MCF 10A (cell line): ENCODE measurements at regions of chr5 and their contacts with region 1.

Region 1: GRCh38 chr5:127206320-127207113 is 84.1 kb upstream of the MEGF10 start:
- DNase-seq: peak; percentile 95
- H3K4me3 Mint-ChIP-seq: no peak overlapping the region
- H3K27ac Mint-ChIP-seq: no peak overlapping the region
- H3K4me1 Mint-ChIP-seq: peaks cover 25% of the 10 kb centered on the region
- H3K27me3 Mint-ChIP-seq: no peaks in the 10 kb centered on the region
- CTCF ChIP-seq: no peak

Region 2: DNA sequence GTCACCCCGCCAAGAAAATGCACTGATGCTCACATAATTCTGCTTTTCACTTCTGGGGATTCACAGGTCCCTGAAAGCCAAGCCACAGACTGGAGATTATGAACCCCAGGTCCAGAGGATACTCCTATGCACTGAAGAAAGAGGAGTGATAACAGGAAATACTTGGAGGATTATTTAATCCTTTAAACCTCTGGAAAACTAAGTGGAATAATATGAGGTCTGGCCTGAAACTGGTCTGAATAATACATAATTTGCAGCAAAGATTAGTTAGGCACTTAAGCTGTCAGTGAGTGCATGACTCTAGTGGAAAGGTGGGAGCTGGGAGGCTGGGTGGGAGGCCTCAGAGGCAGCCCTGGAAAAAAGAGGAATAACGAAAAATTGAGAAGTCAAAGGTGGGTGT is 221.9 kb before region 1 on chr5:
- CTCF ChIA-PET with region 1: no interaction called
- POLR2A ChIA-PET with region 1: no interaction called
- intact Hi-C with region 1: no loop called
- DNase-seq: no peak
- H3K4me3 Mint-ChIP-seq: no peak overlapping the region
- H3K27ac Mint-ChIP-seq: no peak overlapping the region
- H3K4me1 Mint-ChIP-seq: no peaks in the 10 kb centered on the region
- H3K27me3 Mint-ChIP-seq: no peaks in the 10 kb centered on the region
- CTCF ChIP-seq: no peak

Region 3: GRCh38 chr5:127072861-127073846 is 133.4 kb before region 1 on chr5 and contains the start of gene C5orf63:
- CTCF ChIA-PET with region 1: no interaction called
- POLR2A ChIA-PET with region 1: no interaction called
- intact Hi-C with region 1: loop called (anchors 10 kb)
- DNase-seq: peak; percentile 58
- H3K4me3 Mint-ChIP-seq: peak within 1 kb of the TSS; percentile 85
- H3K27ac Mint-ChIP-seq: peak within 1 kb of the TSS; percentile 95
- H3K4me1 Mint-ChIP-seq: peaks cover 19% of the 10 kb centered on the region
- H3K27me3 Mint-ChIP-seq: no peaks in the 10 kb centered on the region
- CTCF ChIP-seq: peak; percentile 13
- total RNA-seq, gene C5orf63: 10.8 and 11.1 TPM in 2 replicates

Region 4: GRCh38 chr5:127505905-127506304 is 299.4 kb after region 1 on chr5:
- CTCF ChIA-PET with region 1: no interaction called
- POLR2A ChIA-PET with region 1: no interaction called
- intact Hi-C with region 1: no loop called
- DNase-seq: no peak
- H3K4me3 Mint-ChIP-seq: no peak overlapping the region
- H3K27ac Mint-ChIP-seq: no peak overlapping the region
- H3K4me1 Mint-ChIP-seq: no peaks in the 10 kb centered on the region
- H3K27me3 Mint-ChIP-seq: peaks cover 40% of the 10 kb centered on the region
- CTCF ChIP-seq: no peak